Left ventricle myocardium inferior (tissue), 1 donor: ENCODE measurements at regions of chr1 and their contacts with region 1.

Region 1: DNA sequence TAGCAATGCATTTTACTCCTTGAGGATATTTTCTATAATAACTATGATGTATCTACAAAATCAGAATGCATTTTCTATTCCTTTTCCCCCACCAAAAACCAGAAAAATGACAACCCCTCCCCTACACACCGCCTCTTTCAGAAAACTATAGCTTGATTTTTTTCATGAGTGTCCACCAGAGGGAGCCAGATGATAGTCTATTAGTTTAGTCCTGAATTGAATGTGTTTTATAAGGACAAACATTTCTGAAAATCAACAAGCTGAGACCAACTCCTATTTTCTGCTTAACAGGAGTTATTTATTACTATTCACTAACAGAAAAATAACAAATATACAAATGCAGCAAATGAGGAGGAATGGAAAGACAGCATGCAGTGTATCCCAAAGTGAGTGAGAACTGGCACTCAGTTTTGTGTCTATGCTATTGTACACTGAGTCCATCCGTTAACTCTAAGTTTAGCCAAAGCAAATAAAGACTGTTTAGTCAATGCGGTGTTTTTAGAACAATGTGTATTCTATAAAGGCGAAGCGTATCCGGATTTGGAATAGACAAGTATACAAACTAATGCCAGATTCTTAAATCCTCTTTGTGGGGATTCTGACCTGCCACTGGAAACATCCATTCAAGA is 182.6 kb downstream of the VAV3 start:
- DNase-seq: no peak
- H3K4me3 ChIP-seq: no peak overlapping the region
- H3K27ac ChIP-seq: peak overlapping the region; percentile 33
- H3K4me1 ChIP-seq: peaks cover 20% of the 10 kb centered on the region
- H3K27me3 ChIP-seq: no peaks in the 10 kb centered on the region
- CTCF ChIP-seq: peak; percentile 80

Region 2: DNA sequence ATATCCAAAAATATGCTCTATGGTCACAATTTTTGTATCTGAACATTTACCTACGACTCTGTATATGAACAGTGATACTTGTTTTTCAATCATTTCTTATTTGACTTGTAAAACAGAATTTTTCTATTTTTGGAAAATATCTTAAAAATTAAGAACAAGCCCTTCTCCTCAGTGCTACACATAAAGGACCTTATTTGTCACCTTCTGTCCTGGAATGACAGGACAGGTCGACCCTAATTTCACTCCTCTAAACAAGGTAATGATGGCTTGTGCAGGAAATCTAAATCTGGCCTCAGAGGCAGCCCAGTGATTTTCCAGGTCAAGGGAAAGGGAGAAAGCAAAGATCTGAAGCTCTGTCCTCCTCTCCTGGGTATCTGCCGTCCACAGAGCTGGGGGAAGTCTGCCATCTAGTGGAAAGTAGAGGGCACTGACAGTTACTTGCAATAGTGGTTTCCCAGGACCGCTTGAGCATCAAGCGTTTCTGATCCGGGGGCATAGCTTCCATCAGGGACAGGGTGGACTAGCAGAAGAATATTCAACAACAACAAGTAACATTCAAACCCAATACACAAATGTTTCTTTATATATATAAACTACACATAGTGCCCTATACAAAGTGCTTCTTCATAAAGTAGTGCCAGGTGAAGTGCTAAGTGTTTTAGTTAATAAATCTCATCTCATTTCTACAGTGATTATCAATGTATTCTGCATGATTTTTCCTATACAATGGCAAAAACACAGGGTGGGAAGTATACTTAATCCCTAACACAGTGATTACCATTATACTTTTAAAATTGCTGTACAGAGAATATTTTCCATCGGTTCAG is 343.2 kb after region 1 on chr1:
- intact Hi-C with region 1: loop called (anchors 1 kb)
- DNase-seq: no peak
- H3K4me3 ChIP-seq: no peak overlapping the region
- H3K27ac ChIP-seq: no peak overlapping the region
- H3K4me1 ChIP-seq: peaks cover 21% of the 10 kb centered on the region
- H3K27me3 ChIP-seq: peaks cover 12% of the 10 kb centered on the region
- CTCF ChIP-seq: peak; percentile 96